HepG2 (cell line): ENCODE measurements at regions of chr11 and their contacts with region 1.

Region 1: GRCh38 chr11:65551572-65552398 is 6.4 kb downstream of the LTBP3 start:
- DNase-seq: peak; percentile 70
- ATAC-seq: peak; percentile 58
- H3K4me3 ChIP-seq: peak overlapping the region in 2 of 3 experiments; percentile 0 to 42; a peak in 1 of 6 replicates
- H3K27ac ChIP-seq: peak overlapping the region; percentile 70
- H3K4me1 ChIP-seq: peaks cover 53% of the 10 kb centered on the region
- H3K27me3 ChIP-seq: no peaks in the 10 kb centered on the region
- CTCF ChIP-seq: peak; percentile 83
- EP300 ChIP-seq: peak in 1 of 2 experiments; percentile 34; a peak in 2 of 4 replicates
- POLR2A ChIP-seq: no peak
- RAD21 ChIP-seq: peak; percentile 42; the same call in 1 of the 2 replicates

Region 2: GRCh38 chr11:65524741-65525545 is 26.8 kb before region 1 on chr11 and contains the start of gene SCYL1:
- CTCF ChIA-PET with region 1: no interaction called
- POLR2A ChIA-PET with region 1: interaction called, 10 read pairs
- in situ Hi-C with region 1: no loop called
- intact Hi-C with region 1: no loop called
- DNase-seq: no peak
- ATAC-seq: peak; percentile 25
- H3K4me3 ChIP-seq: peak within 1 kb of the TSS; percentile 93 to 97 (median 96)
- H3K27ac ChIP-seq: peak within 1 kb of the TSS; percentile 86
- H3K4me1 ChIP-seq: peaks cover 72% of the 10 kb centered on the region
- H3K27me3 ChIP-seq: no peaks in the 10 kb centered on the region; a peak in 1 of 5 replicates
- CTCF ChIP-seq: no peak
- EP300 ChIP-seq: no peak
- POLR2A ChIP-seq: peak; percentile 55 to 62; a peak in 3 of 4 replicates
- RAD21 ChIP-seq: peak; percentile 47; the same call in 1 of the 2 replicates
- total RNA-seq, gene SCYL1: 61.7 and 65.9 TPM in 2 replicates

Region 3: GRCh38 chr11:65530157-65530496 is 21.7 kb before region 1 on chr11:
- CTCF ChIA-PET with region 1: no interaction called
- POLR2A ChIA-PET with region 1: interaction called, 10 read pairs
- in situ Hi-C with region 1: no loop called
- intact Hi-C with region 1: no loop called
- DNase-seq: no peak
- ATAC-seq: peak; percentile 62
- H3K4me3 ChIP-seq: no peak overlapping the region
- H3K27ac ChIP-seq: peak overlapping the region; percentile 66
- H3K4me1 ChIP-seq: peaks cover 47% of the 10 kb centered on the region
- H3K27me3 ChIP-seq: no peaks in the 10 kb centered on the region; a peak in 1 of 5 replicates
- CTCF ChIP-seq: no peak
- EP300 ChIP-seq: no peak
- POLR2A ChIP-seq: no peak
- RAD21 ChIP-seq: no peak

Region 4: GRCh38 chr11:65575568-65576231 is 23.9 kb after region 1 on chr11 and contains the start of gene EHBP1L1:
- CTCF ChIA-PET with region 1: no interaction called
- POLR2A ChIA-PET with region 1: interaction called, 14 read pairs
- in situ Hi-C with region 1: no loop called
- intact Hi-C with region 1: no loop called
- DNase-seq: no peak
- ATAC-seq: peak; percentile 9
- H3K4me3 ChIP-seq: peak within 1 kb of the TSS; percentile 69 to 77 (median 73)
- H3K27ac ChIP-seq: no peak within 1 kb of the TSS
- H3K4me1 ChIP-seq: peaks cover 54% of the 10 kb centered on the region
- H3K27me3 ChIP-seq: no peaks in the 10 kb centered on the region; a peak in 1 of 5 replicates
- CTCF ChIP-seq: no peak
- EP300 ChIP-seq: no peak
- POLR2A ChIP-seq: no peak
- RAD21 ChIP-seq: no peak
- total RNA-seq, gene EHBP1L1: 5.4 and 10.6 TPM in 2 replicates

Region 5: DNA sequence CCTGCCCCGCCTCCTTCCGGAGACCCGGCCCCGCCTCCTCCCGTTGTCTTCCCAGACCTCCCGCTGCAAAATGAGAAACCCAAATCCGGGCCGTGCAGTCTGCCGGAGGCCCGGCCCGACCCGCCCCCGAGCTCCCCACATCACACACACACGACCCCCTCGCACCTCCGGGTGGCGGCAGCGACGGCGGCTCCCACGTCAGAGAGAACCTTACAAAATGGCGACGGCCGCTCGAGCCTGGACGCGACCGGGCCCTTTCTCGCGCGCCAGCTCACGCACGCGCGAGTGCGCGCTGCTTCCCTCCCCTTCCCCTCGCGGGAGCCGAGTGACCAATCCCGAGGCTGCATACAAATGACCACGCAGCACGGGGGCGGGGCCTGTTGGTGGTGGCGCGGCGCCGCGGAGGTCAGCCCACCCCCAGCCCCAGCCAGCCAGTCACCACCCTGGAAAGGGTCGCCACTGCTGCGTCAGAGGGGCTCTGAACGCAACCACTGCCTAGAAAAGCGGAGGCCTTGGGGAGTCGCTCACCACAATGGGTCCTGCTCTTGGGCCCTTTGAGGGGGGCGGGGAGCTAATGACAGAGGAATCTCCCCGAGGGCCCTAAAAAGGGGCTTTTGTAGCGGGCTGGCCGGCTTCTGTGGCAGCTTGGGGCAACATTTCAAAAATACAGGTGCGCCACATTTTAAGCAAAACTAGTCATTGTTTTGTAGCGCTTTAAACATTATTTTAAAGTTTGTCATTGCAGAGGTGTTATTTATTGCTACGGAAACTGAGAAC is 1126.0 kb after region 1 on chr11 and contains the start of gene RBM4B:
- CTCF ChIA-PET with region 1: no interaction called
- POLR2A ChIA-PET with region 1: no interaction called
- in situ Hi-C with region 1: no loop called
- intact Hi-C with region 1: no loop called
- DNase-seq: peak; percentile 93
- ATAC-seq: peak; percentile 96
- H3K4me3 ChIP-seq: peak within 1 kb of the TSS; percentile 60 to 83 (median 82)
- H3K27ac ChIP-seq: peak within 1 kb of the TSS; percentile 87
- H3K4me1 ChIP-seq: peaks cover 40% of the 10 kb centered on the region
- H3K27me3 ChIP-seq: no peaks in the 10 kb centered on the region; a peak in 1 of 5 replicates
- CTCF ChIP-seq: no peak
- EP300 ChIP-seq: 0 out of 4 replicates have a peak, but pooled peaks of 1 of the 2 experiments have one; percentile 7
- POLR2A ChIP-seq: peak; percentile 80 to 95
- RAD21 ChIP-seq: no peak
- total RNA-seq, gene RBM4B: 25.6 and 25.8 TPM in 2 replicates